Caco-2 (cell line): ENCODE measurements at regions of chr6 and their contacts with region 1.

Region 1: GRCh38 chr6:100116411-100117194 is 122.6 kb upstream of the MCHR2 start:
- DNase-seq: peak; percentile 43 to 57
- H3K4me3 ChIP-seq: no peak overlapping the region
- H3K4me3 Mint-ChIP-seq: no peak overlapping the region
- H3K27ac Mint-ChIP-seq: no peak overlapping the region
- H3K4me1 ChIP-seq: no peaks in the 10 kb centered on the region
- H3K4me1 Mint-ChIP-seq: no peaks in the 10 kb centered on the region
- H3K27me3 ChIP-seq: no peaks in the 10 kb centered on the region
- H3K27me3 Mint-ChIP-seq: no peaks in the 10 kb centered on the region
- CTCF ChIP-seq: peak; percentile 52 to 70

Region 2: GRCh38 chr6:100228831-100229641 is 112.4 kb after region 1 on chr6:
- CTCF ChIA-PET with region 1: no interaction called
- POLR2A ChIA-PET with region 1: no interaction called
- intact Hi-C with region 1: loop called (anchors 10 kb)
- DNase-seq: peak; percentile 83 to 87
- H3K4me3 ChIP-seq: peak overlapping the region; percentile 41
- H3K4me3 Mint-ChIP-seq: peak overlapping the region; percentile 78
- H3K27ac Mint-ChIP-seq: peak overlapping the region; percentile 42
- H3K4me1 ChIP-seq: peaks cover 29% of the 10 kb centered on the region
- H3K4me1 Mint-ChIP-seq: peaks cover 7% of the 10 kb centered on the region
- H3K27me3 ChIP-seq: no peaks in the 10 kb centered on the region
- H3K27me3 Mint-ChIP-seq: no peaks in the 10 kb centered on the region
- CTCF ChIP-seq: no peak

Region 3: DNA sequence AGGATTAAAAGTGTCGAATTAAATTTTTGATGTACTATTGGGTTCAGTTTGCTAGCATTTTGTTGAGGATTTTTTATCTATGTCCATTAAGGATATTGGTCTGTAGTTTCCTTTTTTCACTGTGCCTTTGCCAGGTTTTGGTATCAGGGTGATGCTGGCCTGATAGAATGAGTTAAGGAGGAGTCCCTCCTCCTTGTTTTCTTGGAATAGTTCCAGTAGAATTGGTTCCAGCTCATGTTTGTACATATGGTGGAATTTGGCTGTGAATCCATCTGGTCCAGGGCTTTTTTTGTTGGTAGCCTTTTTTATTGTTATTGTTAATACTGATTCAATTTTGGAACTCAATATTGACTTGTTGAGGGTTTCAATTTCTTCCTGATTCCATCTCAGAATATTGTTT is 206.3 kb after region 1 on chr6:
- CTCF ChIA-PET with region 1: interaction called, 3 read pairs
- POLR2A ChIA-PET with region 1: no interaction called
- intact Hi-C with region 1: loop called (anchors 2 kb)
- DNase-seq: no peak
- H3K4me3 ChIP-seq: no peak overlapping the region
- H3K4me3 Mint-ChIP-seq: no peak overlapping the region
- H3K27ac Mint-ChIP-seq: no peak overlapping the region
- H3K4me1 ChIP-seq: no peaks in the 10 kb centered on the region
- H3K4me1 Mint-ChIP-seq: no peaks in the 10 kb centered on the region
- H3K27me3 ChIP-seq: no peaks in the 10 kb centered on the region; the same call in 1 of the 2 replicates
- H3K27me3 Mint-ChIP-seq: no peaks in the 10 kb centered on the region
- CTCF ChIP-seq: no peak

Region 4: DNA sequence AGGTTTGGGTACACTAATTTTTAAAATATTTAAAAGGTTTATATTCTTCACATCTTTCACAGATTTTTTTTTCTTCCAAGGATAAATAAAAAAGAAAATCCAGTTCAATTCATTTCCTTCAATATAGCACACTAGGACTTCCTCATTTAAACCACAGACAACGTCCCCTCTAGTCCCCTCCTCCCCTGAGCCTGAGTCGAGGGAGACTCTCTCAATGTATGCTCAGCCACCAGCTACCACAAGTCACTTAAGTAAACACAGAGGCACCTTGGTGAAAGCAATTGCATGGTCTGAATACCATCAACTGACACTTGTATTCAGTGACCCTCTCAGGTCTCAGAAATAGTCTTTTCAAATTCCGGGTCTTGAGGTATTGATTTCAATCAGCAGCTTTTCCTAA is 259.5 kb after region 1 on chr6:
- CTCF ChIA-PET with region 1: no interaction called
- POLR2A ChIA-PET with region 1: no interaction called
- intact Hi-C with region 1: no loop called
- DNase-seq: no peak
- H3K4me3 ChIP-seq: no peak overlapping the region
- H3K4me3 Mint-ChIP-seq: no peak overlapping the region
- H3K27ac Mint-ChIP-seq: no peak overlapping the region
- H3K4me1 ChIP-seq: no peaks in the 10 kb centered on the region
- H3K4me1 Mint-ChIP-seq: no peaks in the 10 kb centered on the region
- H3K27me3 ChIP-seq: no peaks in the 10 kb centered on the region; the same call in none of the 2 replicates
- H3K27me3 Mint-ChIP-seq: no peaks in the 10 kb centered on the region
- CTCF ChIP-seq: no peak

Region 5: DNA sequence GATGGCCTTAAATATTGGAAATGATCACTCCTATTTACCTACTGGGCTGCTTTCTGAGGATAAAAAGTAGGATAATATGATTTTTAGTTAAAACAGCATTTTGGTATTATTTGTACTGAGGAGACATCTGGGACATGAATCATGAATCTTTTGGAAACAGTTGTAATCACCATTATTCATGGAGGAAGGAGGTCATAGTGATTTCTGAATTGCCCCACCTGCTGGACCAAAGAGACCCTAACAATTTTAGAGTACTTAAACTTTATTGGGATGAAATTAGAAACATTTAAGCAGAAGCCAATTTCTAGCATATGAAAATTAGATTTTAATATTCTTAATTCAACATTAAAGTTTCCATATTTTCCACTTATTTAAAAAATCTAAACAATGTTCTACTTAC is 456.6 kb after region 1 on chr6:
- CTCF ChIA-PET with region 1: no interaction called
- POLR2A ChIA-PET with region 1: no interaction called
- intact Hi-C with region 1: loop called (anchors 1 kb)
- DNase-seq: peak in 1 of 2 experiments; percentile 5
- H3K4me3 ChIP-seq: no peak overlapping the region
- H3K4me3 Mint-ChIP-seq: no peak overlapping the region
- H3K27ac Mint-ChIP-seq: no peak overlapping the region
- H3K4me1 ChIP-seq: no peaks in the 10 kb centered on the region
- H3K4me1 Mint-ChIP-seq: no peaks in the 10 kb centered on the region
- H3K27me3 ChIP-seq: no peaks in the 10 kb centered on the region
- H3K27me3 Mint-ChIP-seq: no peaks in the 10 kb centered on the region
- CTCF ChIP-seq: peak; percentile 46 to 50

Region 6: DNA sequence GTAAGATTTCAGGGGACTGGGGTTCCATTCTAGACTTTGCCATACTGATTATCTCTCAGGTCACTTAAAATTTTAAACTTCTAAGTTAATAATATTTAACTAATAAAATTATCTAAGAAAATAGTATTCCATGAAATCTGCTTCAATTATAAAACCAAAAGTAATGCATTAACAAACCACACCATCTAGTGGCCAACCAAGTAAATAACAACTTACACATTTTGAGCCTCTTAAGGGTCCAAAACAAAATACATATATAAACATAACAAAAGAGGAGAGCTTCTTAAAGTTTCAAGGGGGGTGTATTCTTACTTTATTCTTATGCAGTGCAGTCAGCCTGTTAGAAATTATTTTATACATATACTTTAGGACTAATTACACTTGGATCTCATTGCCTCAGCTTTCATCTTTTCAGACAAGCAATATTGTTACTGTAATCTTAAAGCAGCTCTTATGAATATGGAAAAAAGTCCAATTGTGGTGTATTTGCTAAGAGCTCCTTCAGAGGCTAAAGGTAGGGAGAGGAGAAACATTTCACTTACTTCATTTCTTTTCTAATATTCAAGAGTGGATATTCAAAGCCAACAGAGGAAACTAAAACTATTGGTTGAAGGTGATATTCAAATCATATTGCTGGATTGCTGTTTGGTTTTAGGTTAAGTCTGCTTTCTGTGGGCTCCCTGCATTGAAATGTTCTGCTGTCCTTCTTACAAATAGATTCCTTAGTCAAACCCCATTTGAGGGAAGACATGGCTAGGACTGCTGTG is 547.9 kb after region 1 on chr6:
- CTCF ChIA-PET with region 1: no interaction called
- POLR2A ChIA-PET with region 1: no interaction called
- intact Hi-C with region 1: loop called (anchors 2 kb)
- DNase-seq: peak in 1 of 2 experiments; percentile 13
- H3K4me3 ChIP-seq: no peak overlapping the region
- H3K4me3 Mint-ChIP-seq: no peak overlapping the region
- H3K27ac Mint-ChIP-seq: no peak overlapping the region
- H3K4me1 ChIP-seq: no peaks in the 10 kb centered on the region; the same call in 1 of the 2 replicates
- H3K4me1 Mint-ChIP-seq: peaks cover 8% of the 10 kb centered on the region
- H3K27me3 ChIP-seq: no peaks in the 10 kb centered on the region
- H3K27me3 Mint-ChIP-seq: no peaks in the 10 kb centered on the region
- CTCF ChIP-seq: peak; percentile 57 to 59